SK-N-SH (cell line): ENCODE measurements at regions of chr17 and their contacts with region 1.

Region 1: GRCh38 chr17:40287494-40288369 is at the start of gene CDC6:
- DNase-seq: peak; percentile 93
- H3K4me3 ChIP-seq: peak within 1 kb of the TSS; percentile 66 to 72
- H3K27ac ChIP-seq: peak within 1 kb of the TSS; percentile 56 to 75
- H3K4me1 ChIP-seq: peaks cover 7 to 11% of the 10 kb centered on the region in 2 experiments; a peak in 3 of 4 replicates
- H3K27me3 ChIP-seq: no peaks in the 10 kb centered on the region
- CTCF ChIP-seq: no peak
- EP300 ChIP-seq: no peak
- RAD21 ChIP-seq: no peak
- polyA plus RNA-seq, gene CDC6: 12.7 and 12.8 TPM in 2 replicates

Region 2: GRCh38 chr17:40098846-40099618 is 188.7 kb before region 1 on chr17:
- CTCF ChIA-PET with region 1: no interaction called
- POLR2A ChIA-PET with region 1: no interaction called
- DNase-seq: peak; percentile 97
- H3K4me3 ChIP-seq: peak overlapping the region; percentile 73 to 96
- H3K27ac ChIP-seq: peak overlapping the region; percentile 74 to 95
- H3K4me1 ChIP-seq: peaks cover 14 to 28% of the 10 kb centered on the region in 2 experiments; a peak in 1 of 4 replicates
- H3K27me3 ChIP-seq: no peaks in the 10 kb centered on the region
- CTCF ChIP-seq: no peak
- EP300 ChIP-seq: peak; percentile 16 to 81; a peak in 2 of 4 replicates
- RAD21 ChIP-seq: no peak

Region 3: DNA sequence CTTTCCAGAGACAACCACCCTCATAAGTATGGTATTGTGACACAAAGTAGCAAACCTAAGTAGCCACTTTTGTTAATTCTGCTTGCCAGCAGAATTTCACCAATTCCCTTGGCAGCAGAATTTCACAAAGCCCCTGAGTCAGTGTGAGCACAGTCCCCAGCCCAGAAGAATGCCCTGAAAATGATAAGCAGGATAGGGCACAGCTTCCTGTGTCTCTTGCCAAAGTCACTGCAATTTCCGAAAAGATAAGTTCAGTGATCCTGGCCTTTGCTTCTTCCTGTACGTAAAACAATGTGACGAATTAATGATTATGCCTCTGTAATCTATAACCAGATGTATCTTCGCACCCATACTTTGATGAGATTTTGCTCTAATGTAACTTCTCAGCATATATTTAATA is 84.6 kb before region 1 on chr17:
- CTCF ChIA-PET with region 1: interaction called, 194 read pairs
- POLR2A ChIA-PET with region 1: interaction called, 6 read pairs
- DNase-seq: no peak
- H3K4me3 ChIP-seq: no peak overlapping the region
- H3K27ac ChIP-seq: no peak overlapping the region
- H3K4me1 ChIP-seq: no peaks in the 10 kb centered on the region
- H3K27me3 ChIP-seq: no peaks in the 10 kb centered on the region
- CTCF ChIP-seq: no peak
- EP300 ChIP-seq: no peak
- RAD21 ChIP-seq: no peak

Region 4: DNA sequence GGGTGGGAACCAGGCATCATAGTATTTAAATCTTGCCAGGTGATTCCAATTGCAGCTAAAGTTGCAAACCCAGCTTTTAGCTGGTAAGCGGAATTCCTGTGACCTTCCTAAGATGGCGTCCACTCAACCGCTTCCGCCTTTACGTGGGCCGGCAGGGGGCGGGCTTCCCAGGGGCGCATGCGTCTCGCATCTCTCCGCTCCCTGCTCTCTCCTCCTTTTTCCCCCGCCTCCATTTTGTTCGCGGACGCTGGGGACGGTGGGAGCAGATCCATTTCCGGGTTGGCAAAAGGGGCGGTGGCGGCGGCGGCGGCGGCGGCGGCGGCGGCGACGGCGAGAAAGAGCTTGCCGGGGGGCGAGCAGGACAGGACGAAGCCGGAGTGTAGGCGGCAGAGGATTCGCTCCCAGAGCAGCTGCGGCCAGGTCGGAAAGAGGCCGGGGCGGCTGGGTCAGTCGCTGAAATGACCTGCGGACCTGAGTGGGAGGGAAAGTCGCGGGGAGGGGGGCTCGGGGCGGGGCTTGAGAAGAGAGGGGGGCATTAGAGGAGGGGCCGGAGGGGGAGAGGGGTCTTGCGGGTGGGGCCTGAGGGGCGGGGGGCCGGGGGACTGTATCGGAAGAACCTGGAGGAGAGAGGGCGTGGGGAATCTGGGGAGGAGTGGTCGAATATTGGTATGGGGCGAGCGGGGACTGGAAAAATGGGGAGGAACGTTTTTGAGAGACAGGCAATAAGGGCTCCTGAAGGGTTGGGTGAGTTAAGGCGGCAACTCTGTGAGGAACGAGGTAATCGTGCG is 68.5 kb before region 1 on chr17 and contains the start of gene WIPF2:
- CTCF ChIA-PET with region 1: interaction called, 15 read pairs
- POLR2A ChIA-PET with region 1: interaction called, 4 read pairs
- DNase-seq: peak; percentile 95
- H3K4me3 ChIP-seq: peak within 1 kb of the TSS; percentile 65 to 100
- H3K27ac ChIP-seq: peak within 1 kb of the TSS; percentile 90 to 94
- H3K4me1 ChIP-seq: peaks cover 0 to 4% of the 10 kb centered on the region in 2 experiments; a peak in 1 of 4 replicates
- H3K27me3 ChIP-seq: no peaks in the 10 kb centered on the region
- CTCF ChIP-seq: peak; percentile 56
- EP300 ChIP-seq: peak in 1 of 2 experiments; percentile 56; a peak in 1 of 4 replicates
- RAD21 ChIP-seq: no peak
- polyA plus RNA-seq, gene WIPF2: 5.9 and 6.8 TPM in 2 replicates

Region 5: DNA sequence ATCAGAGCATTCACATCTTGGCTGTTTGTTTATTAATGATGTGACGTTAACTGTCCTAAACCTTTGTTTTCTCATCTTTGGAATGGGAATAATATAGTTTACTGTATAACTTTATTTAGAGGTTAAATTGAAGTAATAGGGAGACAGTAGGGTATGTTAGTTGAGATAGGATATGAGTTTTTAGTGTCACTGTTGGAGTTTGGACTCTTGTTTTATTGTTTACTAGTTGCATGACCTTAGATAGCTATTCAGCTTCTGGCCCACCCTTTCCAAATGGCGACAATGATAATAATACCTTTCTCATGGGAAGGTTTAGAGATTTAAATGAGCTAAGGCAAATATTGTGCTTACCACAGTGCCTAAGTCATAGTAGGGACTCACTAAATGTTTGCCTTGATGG is 28.2 kb before region 1 on chr17:
- CTCF ChIA-PET with region 1: no interaction called
- POLR2A ChIA-PET with region 1: no interaction called
- DNase-seq: no peak
- H3K4me3 ChIP-seq: no peak overlapping the region
- H3K27ac ChIP-seq: no peak overlapping the region
- H3K4me1 ChIP-seq: no peaks in the 10 kb centered on the region
- H3K27me3 ChIP-seq: no peaks in the 10 kb centered on the region
- CTCF ChIP-seq: no peak
- EP300 ChIP-seq: no peak
- RAD21 ChIP-seq: no peak

Region 6: GRCh38 chr17:40303009-40303657 is 15.4 kb after region 1 on chr17:
- CTCF ChIA-PET with region 1: interaction called, 21 read pairs
- POLR2A ChIA-PET with region 1: interaction called, 5 read pairs
- DNase-seq: peak; percentile 63
- H3K4me3 ChIP-seq: no peak overlapping the region; a peak in 1 of 4 replicates
- H3K27ac ChIP-seq: peak overlapping the region; percentile 82 to 99
- H3K4me1 ChIP-seq: peaks cover 48 to 53% of the 10 kb centered on the region in 2 experiments
- H3K27me3 ChIP-seq: no peaks in the 10 kb centered on the region
- CTCF ChIP-seq: peak; percentile 86
- EP300 ChIP-seq: 0 out of 4 replicates have a peak, but pooled peaks of 1 of the 2 experiments have one; percentile 45
- RAD21 ChIP-seq: peak; percentile 96

Region 7: GRCh38 chr17:40317880-40318829 is 30.4 kb after region 1 on chr17:
- CTCF ChIA-PET with region 1: interaction called, 1,706 read pairs
- POLR2A ChIA-PET with region 1: no interaction called
- DNase-seq: peak; percentile 99
- H3K4me3 ChIP-seq: peak overlapping the region; percentile 89 to 96
- H3K27ac ChIP-seq: peak overlapping the region; percentile 94 to 95
- H3K4me1 ChIP-seq: peaks cover 61 to 91% of the 10 kb centered on the region in 2 experiments
- H3K27me3 ChIP-seq: no peaks in the 10 kb centered on the region
- CTCF ChIP-seq: no peak
- EP300 ChIP-seq: no peak
- RAD21 ChIP-seq: 0 out of 2 replicates have a peak, but pooled peaks have one; percentile 8